ENCODE measurements at regions of chr11 and their contacts with region 1.

Region 1: DNA sequence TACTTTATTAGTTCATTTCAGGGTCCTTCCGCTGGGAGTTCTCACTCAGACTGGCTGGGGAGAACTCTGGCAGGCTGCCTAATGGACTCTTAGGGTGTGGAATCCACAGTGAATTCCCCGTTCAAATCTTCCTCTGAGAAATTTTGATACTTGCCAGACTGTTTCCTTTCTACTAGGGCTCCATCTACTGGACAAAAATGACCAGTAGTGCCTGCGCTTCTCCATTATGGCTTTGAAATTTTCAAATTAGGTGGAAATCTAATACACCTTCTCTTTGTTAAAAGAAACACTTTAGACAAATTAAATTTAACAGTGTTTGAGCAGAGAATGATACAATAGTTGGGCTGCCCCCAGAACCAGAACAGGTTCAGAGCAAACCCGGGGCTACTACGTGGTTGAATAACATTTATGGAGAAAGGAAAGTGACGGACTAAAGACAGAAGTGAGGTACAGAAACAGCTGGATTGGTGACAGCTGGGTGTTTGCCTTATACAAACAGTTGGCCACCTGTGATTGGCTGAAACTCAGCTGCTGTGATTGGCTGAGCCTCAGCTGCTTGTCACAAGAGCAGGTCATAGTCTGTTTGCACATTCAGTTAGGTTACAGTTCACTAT is 52.9 kb upstream of the FDX1 start:
- DNase-seq: peak; percentile 32
- H3K4me3 Mint-ChIP-seq: no peak overlapping the region
- H3K27ac Mint-ChIP-seq: no peak overlapping the region
- H3K4me1 Mint-ChIP-seq: peaks cover 17% of the 10 kb centered on the region
- H3K27me3 Mint-ChIP-seq: peaks cover 5% of the 10 kb centered on the region

Region 2: DNA sequence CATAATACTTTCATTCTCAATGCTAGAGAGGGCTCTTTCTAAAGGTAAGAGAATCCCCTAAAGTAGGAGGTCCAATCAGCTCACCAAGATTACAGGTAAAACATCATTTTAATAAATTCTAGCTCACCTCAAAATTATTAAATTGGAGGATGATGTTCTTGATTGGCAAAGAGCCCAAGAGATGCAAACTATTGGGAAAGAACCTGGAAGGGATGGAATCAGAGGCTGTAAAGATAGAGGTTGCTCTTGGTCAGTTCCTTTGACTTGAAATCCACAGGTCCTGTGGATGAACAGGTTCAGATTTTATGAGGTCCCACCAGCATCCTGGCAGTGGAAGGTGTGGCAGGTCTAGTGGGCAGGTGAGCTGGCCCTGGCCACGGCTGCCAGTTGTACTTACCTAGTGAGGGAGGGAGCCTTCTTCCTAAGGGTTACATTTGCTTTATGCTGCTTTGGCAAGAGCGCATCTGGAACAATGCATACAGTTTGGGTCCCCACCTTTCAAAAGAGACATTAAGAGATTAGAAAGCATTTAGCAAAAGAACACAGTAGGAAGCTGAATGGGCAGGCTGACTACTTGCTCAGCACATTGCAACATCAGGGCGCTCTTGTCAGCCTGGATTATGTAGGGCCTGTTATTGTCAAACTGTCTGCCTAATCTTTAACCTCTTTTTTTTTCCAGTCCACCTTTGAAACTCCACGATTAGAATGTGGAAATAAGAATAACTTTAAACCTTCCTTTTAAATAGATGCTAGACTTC is 177.5 kb before region 1 on chr11:
- CTCF ChIA-PET with region 1: interaction called, 49 read pairs
- POLR2A ChIA-PET with region 1: no interaction called
- intact Hi-C with region 1: loop called (anchors 1 kb)
- DNase-seq: no peak
- H3K4me3 Mint-ChIP-seq: no peak overlapping the region
- H3K27ac Mint-ChIP-seq: no peak overlapping the region
- H3K4me1 Mint-ChIP-seq: no peaks in the 10 kb centered on the region
- H3K27me3 Mint-ChIP-seq: peaks cover 3% of the 10 kb centered on the region

Region 3: GRCh38 chr11:110327508-110327907 is 49.3 kb before region 1 on chr11:
- CTCF ChIA-PET with region 1: no interaction called
- POLR2A ChIA-PET with region 1: interaction called, 5 read pairs
- intact Hi-C with region 1: loop called (anchors 1 kb)
- DNase-seq: no peak
- H3K4me3 Mint-ChIP-seq: peak overlapping the region; percentile 91
- H3K27ac Mint-ChIP-seq: peak overlapping the region; percentile 84
- H3K4me1 Mint-ChIP-seq: peaks cover 20% of the 10 kb centered on the region
- H3K27me3 Mint-ChIP-seq: no peaks in the 10 kb centered on the region

Region 4: GRCh38 chr11:110366291-110366690 is 10.5 kb before region 1 on chr11:
- CTCF ChIA-PET with region 1: interaction called, 10 read pairs
- POLR2A ChIA-PET with region 1: no interaction called
- intact Hi-C with region 1: no loop called
- DNase-seq: no peak
- H3K4me3 Mint-ChIP-seq: no peak overlapping the region
- H3K27ac Mint-ChIP-seq: no peak overlapping the region
- H3K4me1 Mint-ChIP-seq: peaks cover 8% of the 10 kb centered on the region
- H3K27me3 Mint-ChIP-seq: peaks cover 6% of the 10 kb centered on the region

Region 5: DNA sequence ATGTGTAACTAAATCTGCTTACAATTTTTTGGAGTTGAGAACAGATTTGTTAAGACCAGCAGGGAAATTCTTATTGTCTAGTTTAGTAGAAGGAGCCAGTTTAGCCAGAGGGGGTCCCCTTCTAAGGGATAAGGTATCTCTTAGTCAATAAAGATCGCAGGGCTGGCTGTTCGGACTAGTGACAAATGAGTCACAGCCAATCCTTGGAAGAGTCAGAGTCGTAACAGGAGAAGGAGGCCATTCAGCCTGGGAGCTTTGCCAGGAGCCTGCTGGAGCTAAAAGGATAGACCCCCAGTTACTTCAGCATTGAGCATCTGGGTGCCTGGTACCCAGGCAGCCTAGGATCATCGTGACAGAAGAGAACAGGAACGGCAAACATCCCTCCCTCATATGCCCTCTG is 527.0 kb after region 1 on chr11:
- CTCF ChIA-PET with region 1: no interaction called
- POLR2A ChIA-PET with region 1: no interaction called
- intact Hi-C with region 1: no loop called
- DNase-seq: no peak
- H3K4me3 Mint-ChIP-seq: no peak overlapping the region
- H3K27ac Mint-ChIP-seq: no peak overlapping the region
- H3K4me1 Mint-ChIP-seq: peaks cover 19% of the 10 kb centered on the region
- H3K27me3 Mint-ChIP-seq: peaks cover 2% of the 10 kb centered on the region